K562 (cell line): ENCODE measurements at regions of chr4 and their contacts with region 1.

Region 1: DNA sequence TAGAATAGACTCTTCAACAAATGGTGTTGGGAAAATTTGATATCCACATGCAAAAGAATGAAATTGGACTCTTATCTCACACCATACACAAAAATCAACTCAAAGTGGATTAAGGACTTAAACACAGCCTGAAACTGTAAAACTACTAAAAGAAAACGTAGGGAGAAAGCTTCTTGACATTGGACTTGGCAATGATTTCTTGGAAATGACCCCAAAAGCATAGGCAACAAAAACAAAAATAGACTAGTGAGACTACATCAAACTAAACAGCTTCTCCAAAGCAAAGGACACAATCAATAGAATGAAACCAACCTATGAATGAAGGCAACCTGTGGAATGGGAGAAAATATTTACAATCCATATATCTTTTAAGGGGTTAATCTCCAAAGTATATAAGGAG is 94.7 kb upstream of the INTU start:
- DNase-seq: no peak
- ATAC-seq: no peak
- H3K4me3 ChIP-seq: no peak overlapping the region
- H3K27ac ChIP-seq: no peak overlapping the region
- H3K4me1 ChIP-seq: peaks cover 0 to 5% of the 10 kb centered on the region in 2 experiments; a peak in 2 of 5 replicates
- H3K27me3 ChIP-seq: no peaks in the 10 kb centered on the region; a peak in 2 of 5 replicates
- CTCF ChIP-seq: no peak
- EP300 ChIP-seq: no peak
- POLR2A ChIP-seq: no peak
- RAD21 ChIP-seq: no peak

Region 2: DNA sequence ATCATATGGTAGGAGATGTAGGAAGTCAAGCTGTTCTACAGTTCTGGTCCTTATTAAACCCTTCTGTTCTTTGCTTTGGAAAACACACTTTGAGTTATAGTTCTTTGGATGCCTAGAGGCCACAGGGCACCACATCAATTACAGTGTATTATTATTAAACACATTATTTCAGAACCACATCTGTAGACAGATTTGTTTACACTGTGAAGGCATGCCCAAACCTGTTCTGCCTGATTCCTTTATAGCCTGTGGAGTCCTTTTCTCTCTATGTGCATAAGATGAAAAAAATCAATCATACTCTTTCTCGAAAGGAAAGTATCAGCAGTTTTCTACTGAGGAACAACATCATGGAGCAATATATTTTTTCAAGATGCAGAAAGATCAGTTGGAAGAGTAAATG is 276.5 kb before region 1 on chr4:
- CTCF ChIA-PET with region 1: no interaction called
- POLR2A ChIA-PET with region 1: no interaction called
- in situ Hi-C with region 1: no loop called
- intact Hi-C with region 1: no loop called
- DNase-seq: no peak
- ATAC-seq: no peak
- H3K4me3 ChIP-seq: no peak overlapping the region
- H3K27ac ChIP-seq: no peak overlapping the region
- H3K4me1 ChIP-seq: no peaks in the 10 kb centered on the region
- H3K27me3 ChIP-seq: no peaks in the 10 kb centered on the region
- CTCF ChIP-seq: no peak
- EP300 ChIP-seq: no peak
- POLR2A ChIP-seq: no peak
- RAD21 ChIP-seq: no peak

Region 3: DNA sequence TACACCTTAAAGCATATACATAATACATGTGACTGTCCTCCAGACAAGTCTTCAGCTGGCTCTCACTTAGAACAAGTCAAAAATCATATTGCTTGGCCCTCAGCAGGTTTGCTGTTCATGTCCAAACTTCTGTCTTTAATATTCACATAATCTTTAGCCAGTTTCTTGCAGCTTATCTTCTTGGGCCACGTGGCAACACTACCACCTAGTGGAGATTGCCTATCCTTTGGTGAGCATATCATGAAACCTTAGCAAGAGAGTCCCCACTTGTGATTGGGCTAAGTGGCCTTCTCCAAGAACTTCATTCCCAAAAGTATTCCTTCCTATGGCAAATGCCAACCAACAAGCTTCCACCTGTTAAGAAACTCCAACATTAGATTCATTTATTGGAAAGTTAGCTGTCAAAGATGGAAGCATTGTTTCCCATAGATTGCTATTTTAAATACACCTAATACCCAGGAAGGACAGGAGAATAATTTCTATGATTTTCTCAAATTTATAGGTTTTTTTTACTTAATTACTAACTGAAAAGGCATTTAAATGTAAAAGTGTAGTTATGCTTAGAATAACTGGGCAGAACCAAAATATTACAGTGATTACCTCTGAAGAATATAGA is 137.2 kb before region 1 on chr4:
- CTCF ChIA-PET with region 1: no interaction called
- POLR2A ChIA-PET with region 1: no interaction called
- in situ Hi-C with region 1: no loop called
- intact Hi-C with region 1: loop called (anchors 2 kb)
- DNase-seq: peak; percentile 41 to 80 (median 52)
- ATAC-seq: peak; percentile 93
- H3K4me3 ChIP-seq: no peak overlapping the region
- H3K27ac ChIP-seq: no peak overlapping the region
- H3K4me1 ChIP-seq: no peaks in the 10 kb centered on the region
- H3K27me3 ChIP-seq: peaks cover 0 to 4% of the 10 kb centered on the region in 2 experiments; a peak in 1 of 5 replicates
- CTCF ChIP-seq: peak; percentile 74 to 85 (median 75)
- EP300 ChIP-seq: no peak
- POLR2A ChIP-seq: no peak
- RAD21 ChIP-seq: peak; percentile 82 to 89

Region 4: GRCh38 chr4:127479031-127479622 is 58.9 kb before region 1 on chr4:
- CTCF ChIA-PET with region 1: interaction called, 3 read pairs
- POLR2A ChIA-PET with region 1: no interaction called
- in situ Hi-C with region 1: no loop called
- intact Hi-C with region 1: loop called (anchors 1 kb)
- DNase-seq: peak; percentile 12 to 54 (median 18)
- ATAC-seq: 0 out of 3 replicates have a peak, but pooled peaks have one; percentile 47
- H3K4me3 ChIP-seq: no peak overlapping the region
- H3K27ac ChIP-seq: no peak overlapping the region
- H3K4me1 ChIP-seq: no peaks in the 10 kb centered on the region
- H3K27me3 ChIP-seq: no peaks in the 10 kb centered on the region
- CTCF ChIP-seq: peak; percentile 25 to 67 (median 39); a peak in 4 of 6 replicates
- EP300 ChIP-seq: no peak
- POLR2A ChIP-seq: no peak
- RAD21 ChIP-seq: peak; percentile 61 to 69

Region 5: DNA sequence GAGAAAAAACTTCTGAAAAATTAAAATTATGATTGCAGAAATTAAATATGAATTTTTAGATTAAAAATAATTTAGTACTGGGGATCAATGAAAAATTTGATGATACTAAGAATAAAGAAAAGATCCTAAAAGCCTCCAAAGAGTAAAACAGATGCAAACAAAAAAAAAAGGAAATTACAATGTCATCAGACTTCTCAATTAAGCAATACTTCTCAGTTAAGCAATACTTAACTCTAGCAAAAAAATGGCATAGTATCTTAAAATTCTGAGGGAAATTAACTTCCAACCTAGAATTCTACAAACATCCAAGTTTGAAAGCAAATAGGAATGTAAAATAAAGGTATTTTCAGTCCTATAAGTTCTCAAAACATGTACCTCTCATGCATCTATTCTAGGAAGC is 46.4 kb before region 1 on chr4:
- CTCF ChIA-PET with region 1: no interaction called
- POLR2A ChIA-PET with region 1: no interaction called
- in situ Hi-C with region 1: no loop called
- intact Hi-C with region 1: loop called (anchors 5 kb)
- DNase-seq: no peak
- ATAC-seq: no peak
- H3K4me3 ChIP-seq: no peak overlapping the region
- H3K27ac ChIP-seq: no peak overlapping the region
- H3K4me1 ChIP-seq: no peaks in the 10 kb centered on the region; a peak in 1 of 5 replicates
- H3K27me3 ChIP-seq: no peaks in the 10 kb centered on the region
- CTCF ChIP-seq: no peak
- EP300 ChIP-seq: no peak
- POLR2A ChIP-seq: no peak
- RAD21 ChIP-seq: no peak

Region 6: DNA sequence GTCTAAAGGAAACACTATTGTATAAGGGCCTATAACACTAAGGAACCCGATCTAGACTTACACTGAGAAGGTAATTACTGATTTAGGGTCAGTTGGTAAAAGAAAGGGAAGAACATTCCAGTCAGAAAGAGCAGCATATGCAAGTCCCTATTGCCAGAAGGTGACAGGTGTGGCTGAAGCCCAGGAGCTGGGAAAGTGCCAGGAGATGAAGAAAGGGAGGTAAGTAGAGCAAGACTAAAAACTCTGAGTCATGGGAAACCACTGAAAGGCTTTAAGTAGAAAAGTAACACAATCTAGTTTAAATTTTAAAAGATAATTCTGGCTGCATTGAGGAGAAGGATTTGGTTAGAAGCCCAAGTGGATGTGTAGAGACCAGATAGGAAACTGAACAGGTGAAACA is 17.1 kb after region 1 on chr4:
- CTCF ChIA-PET with region 1: no interaction called
- POLR2A ChIA-PET with region 1: no interaction called
- in situ Hi-C with region 1: no loop called
- intact Hi-C with region 1: no loop called
- DNase-seq: no peak
- ATAC-seq: no peak
- H3K4me3 ChIP-seq: no peak overlapping the region
- H3K27ac ChIP-seq: no peak overlapping the region
- H3K4me1 ChIP-seq: no peaks in the 10 kb centered on the region
- H3K27me3 ChIP-seq: no peaks in the 10 kb centered on the region; a peak in 1 of 5 replicates
- CTCF ChIP-seq: no peak
- EP300 ChIP-seq: no peak
- POLR2A ChIP-seq: no peak
- RAD21 ChIP-seq: no peak

Region 7: GRCh38 chr4:127586922-127587571 is 49.0 kb after region 1 on chr4:
- CTCF ChIA-PET with region 1: no interaction called
- POLR2A ChIA-PET with region 1: no interaction called
- in situ Hi-C with region 1: no loop called
- intact Hi-C with region 1: loop called (anchors 1 kb)
- DNase-seq: peak; percentile 42 to 76 (median 56)
- ATAC-seq: peak; percentile 99
- H3K4me3 ChIP-seq: no peak overlapping the region
- H3K27ac ChIP-seq: no peak overlapping the region
- H3K4me1 ChIP-seq: 0 out of 5 replicates have a peak, but pooled peaks cover 0 to 3% of the 10 kb centered on the region in 2 experiments
- H3K27me3 ChIP-seq: peaks cover 0 to 3% of the 10 kb centered on the region in 2 experiments; a peak in 1 of 5 replicates
- CTCF ChIP-seq: peak; percentile 74 to 82 (median 77)
- EP300 ChIP-seq: no peak
- POLR2A ChIP-seq: no peak
- RAD21 ChIP-seq: peak; percentile 49 to 79; a peak in 3 of 4 replicates

Region 8: DNA sequence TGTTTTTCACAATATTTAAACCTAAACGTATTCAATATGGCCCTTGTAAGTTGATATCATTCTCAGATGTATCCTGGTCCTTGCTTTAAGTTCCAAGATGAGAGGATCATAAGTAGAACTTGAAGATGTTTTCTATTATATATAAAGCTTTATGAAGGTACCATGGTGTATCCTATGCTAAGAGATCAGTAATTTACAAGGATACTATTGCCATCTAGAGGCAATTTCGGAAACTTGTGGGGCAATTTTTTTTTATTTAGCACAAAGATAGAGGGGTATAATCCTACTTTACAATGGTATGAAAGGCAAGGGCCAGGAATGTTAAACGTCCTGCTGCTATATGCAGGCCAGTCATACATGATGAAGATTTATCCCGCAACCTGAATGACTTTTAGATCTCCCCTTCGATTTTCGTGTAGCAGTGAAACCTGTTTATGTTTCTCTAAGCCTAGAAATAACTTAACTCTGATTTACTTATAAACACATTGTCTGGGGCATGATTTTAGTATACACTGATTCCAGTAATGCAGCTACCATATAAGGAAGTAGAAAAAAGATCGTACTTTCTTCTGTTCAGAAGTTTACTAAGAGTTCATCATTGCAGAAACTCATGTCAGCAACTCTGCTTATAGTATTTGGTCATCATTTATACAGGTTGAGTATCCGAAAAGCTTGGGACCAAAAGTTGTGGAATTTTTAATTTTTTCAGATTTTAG is 194.8 kb after region 1 on chr4:
- CTCF ChIA-PET with region 1: no interaction called
- POLR2A ChIA-PET with region 1: no interaction called
- in situ Hi-C with region 1: no loop called
- intact Hi-C with region 1: no loop called
- DNase-seq: peak in 2 of 4 experiments; percentile 42 to 43
- ATAC-seq: peak; percentile 86
- H3K4me3 ChIP-seq: no peak overlapping the region
- H3K27ac ChIP-seq: no peak overlapping the region
- H3K4me1 ChIP-seq: no peaks in the 10 kb centered on the region; a peak in 3 of 5 replicates
- H3K27me3 ChIP-seq: no peaks in the 10 kb centered on the region
- CTCF ChIP-seq: peak; percentile 38 to 76 (median 47); a peak in 4 of 6 replicates
- EP300 ChIP-seq: no peak
- POLR2A ChIP-seq: no peak
- RAD21 ChIP-seq: peak; percentile 63 to 81